ENCODE measurements at regions of chr14 and their contacts with region 1.

Region 1: GRCh38 chr14:76456200-76456599 is 80.3 kb downstream of the ESRRB start:
- DNase-seq: peak in 1 of 3 donors; percentile 37
- ATAC-seq: peak; percentile 47
- H3K4me3 ChIP-seq: no peak overlapping the region
- H3K4me1 ChIP-seq: no peaks in the 10 kb centered on the region
- CTCF ChIP-seq: no peak

Region 2: GRCh38 chr14:76034566-76034965 is 421.6 kb before region 1 on chr14:
- intact Hi-C with region 1: no loop called
- DNase-seq: no peak
- ATAC-seq: no peak
- H3K4me3 ChIP-seq: no peak overlapping the region
- H3K4me1 ChIP-seq: no peaks in the 10 kb centered on the region
- CTCF ChIP-seq: no peak

Region 3: GRCh38 chr14:76647697-76648298 is 191.6 kb after region 1 on chr14:
- intact Hi-C with region 1: loop called in 1 of 2 experiments (anchors 10 kb)
- DNase-seq: peak in 1 of 3 donors; percentile 23
- ATAC-seq: peak; percentile 67
- H3K4me3 ChIP-seq: no peak overlapping the region
- H3K4me1 ChIP-seq: no peaks in the 10 kb centered on the region
- CTCF ChIP-seq: peak; percentile 64